Activated CD8-positive, alpha-beta T cell treated with anti-CD3 and anti-CD28 coated beads, Interleukin-2, amount 10 ng/mL, durations not matched to agents 7 days and 5 days (primary cell): ENCODE measurements at regions of chr1 and their contacts with region 1.

Region 1: DNA sequence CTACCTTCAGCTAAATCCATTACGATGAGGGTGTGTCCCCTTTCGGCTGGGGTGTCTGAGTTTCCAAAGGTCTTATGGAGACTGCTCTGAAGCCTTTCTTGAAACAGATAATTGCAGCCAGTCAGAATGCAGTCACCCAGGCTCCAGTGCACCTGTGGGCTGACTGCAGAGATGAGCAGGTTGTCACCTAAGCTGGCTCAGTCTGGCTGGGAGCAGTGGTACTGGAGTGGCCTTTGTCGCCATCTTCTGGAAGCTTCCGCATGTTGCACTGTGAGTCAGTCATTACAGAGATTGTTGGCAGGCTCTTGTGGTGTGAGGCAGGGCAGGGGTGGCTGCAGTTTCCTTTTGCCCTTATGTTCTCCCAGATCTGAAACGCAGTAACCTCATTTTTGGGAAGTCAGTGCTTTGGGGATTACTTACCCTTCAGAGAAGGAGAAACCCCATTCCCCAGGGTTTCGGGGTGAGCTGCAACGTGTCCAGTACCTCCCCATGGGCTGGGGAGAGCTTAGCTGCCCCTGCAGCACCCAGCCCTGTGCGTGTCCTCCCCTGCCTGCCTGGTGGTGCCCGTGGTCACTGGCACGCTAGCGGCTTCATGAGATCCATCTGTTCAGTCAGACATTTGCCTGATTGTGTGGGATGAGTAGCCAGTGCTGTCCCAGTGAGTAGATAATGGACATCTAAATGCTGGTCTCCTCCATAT is 48.0 kb downstream of the SMYD2 start:
- DNase-seq: peak; percentile 86
- ATAC-seq: peak; percentile 94
- H3K4me3 Mint-ChIP-seq: no peak overlapping the region
- H3K27ac Mint-ChIP-seq: no peak overlapping the region
- H3K4me1 Mint-ChIP-seq: peaks cover 12% of the 10 kb centered on the region
- H3K27me3 Mint-ChIP-seq: no peaks in the 10 kb centered on the region

Region 2: DNA sequence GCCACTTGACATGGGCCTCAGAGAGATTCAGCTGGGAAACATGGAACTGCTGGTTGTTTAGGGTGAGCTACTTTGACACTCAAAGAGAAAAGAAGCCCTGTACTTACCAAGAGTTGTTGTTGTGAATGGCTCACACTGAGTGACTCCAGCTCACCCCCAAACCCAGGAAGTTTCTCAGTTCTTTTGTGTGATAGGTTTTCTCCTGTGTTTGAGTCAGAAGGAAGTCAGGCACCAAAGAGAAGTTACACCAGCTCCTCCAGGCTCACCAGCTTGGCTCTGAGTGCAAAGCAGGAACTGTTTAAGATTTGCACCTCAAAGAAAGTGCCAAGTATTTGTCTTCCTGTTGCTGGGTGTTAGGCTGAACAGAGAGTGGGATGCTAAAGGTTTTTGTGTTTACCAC is 452.4 kb before region 1 on chr1:
- CTCF ChIA-PET with region 1: no interaction called
- POLR2A ChIA-PET with region 1: no interaction called
- DNase-seq: no peak
- ATAC-seq: no peak
- H3K4me3 Mint-ChIP-seq: no peak overlapping the region
- H3K27ac Mint-ChIP-seq: no peak overlapping the region
- H3K4me1 Mint-ChIP-seq: peaks cover 3% of the 10 kb centered on the region
- H3K27me3 Mint-ChIP-seq: peaks cover 2% of the 10 kb centered on the region

Region 3: GRCh38 chr1:213987927-213988506 is 340.9 kb before region 1 on chr1 and contains the start of gene PROX1:
- CTCF ChIA-PET with region 1: no interaction called
- POLR2A ChIA-PET with region 1: no interaction called
- DNase-seq: peak; percentile 59
- ATAC-seq: peak; percentile 73
- H3K4me3 Mint-ChIP-seq: peak within 1 kb of the TSS; percentile 79
- H3K27ac Mint-ChIP-seq: peak within 1 kb of the TSS; percentile 70
- H3K4me1 Mint-ChIP-seq: peaks cover 23% of the 10 kb centered on the region
- H3K27me3 Mint-ChIP-seq: peaks cover 85% of the 10 kb centered on the region
- total RNA-seq, gene PROX1: not detected

Region 4: DNA sequence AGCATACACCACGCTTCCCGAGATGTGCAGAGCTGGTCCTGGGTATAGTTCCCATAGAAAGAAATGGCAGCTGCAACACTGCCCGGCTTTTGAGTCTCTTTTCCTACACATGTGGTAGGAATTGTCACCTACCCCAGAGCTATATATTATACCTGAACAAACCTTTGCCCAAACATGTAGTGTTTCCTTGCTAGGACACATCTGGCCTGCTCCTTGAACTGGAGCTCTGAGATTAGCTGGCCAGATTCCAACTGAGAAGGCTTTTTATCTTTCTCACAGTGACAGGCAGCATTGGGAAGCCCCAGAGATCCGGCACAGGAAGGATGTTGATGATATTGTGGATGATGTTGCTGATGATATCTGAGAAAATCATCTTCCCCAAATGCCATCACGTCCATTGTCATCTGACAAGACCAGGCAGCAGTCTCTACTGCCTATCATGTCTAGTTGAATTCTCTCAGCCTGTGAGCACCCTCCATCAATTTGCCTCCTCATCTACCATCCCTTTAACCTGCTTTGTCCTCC is 163.0 kb before region 1 on chr1:
- CTCF ChIA-PET with region 1: no interaction called
- POLR2A ChIA-PET with region 1: no interaction called
- DNase-seq: no peak
- ATAC-seq: no peak
- H3K4me3 Mint-ChIP-seq: no peak overlapping the region
- H3K27ac Mint-ChIP-seq: no peak overlapping the region
- H3K4me1 Mint-ChIP-seq: no peaks in the 10 kb centered on the region
- H3K27me3 Mint-ChIP-seq: no peaks in the 10 kb centered on the region

Region 5: GRCh38 chr1:214281021-214281719 is 47.8 kb before region 1 on chr1 and contains the start of gene SMYD2:
- CTCF ChIA-PET with region 1: interaction called, 24 read pairs
- POLR2A ChIA-PET with region 1: no interaction called
- DNase-seq: peak; percentile 73
- ATAC-seq: peak; percentile 79
- H3K4me3 Mint-ChIP-seq: peak within 1 kb of the TSS; percentile 84
- H3K27ac Mint-ChIP-seq: peak within 1 kb of the TSS; percentile 82
- H3K4me1 Mint-ChIP-seq: peaks cover 47% of the 10 kb centered on the region
- H3K27me3 Mint-ChIP-seq: no peaks in the 10 kb centered on the region
- total RNA-seq, gene SMYD2: 37.2 to 38.4 TPM

Region 6: DNA sequence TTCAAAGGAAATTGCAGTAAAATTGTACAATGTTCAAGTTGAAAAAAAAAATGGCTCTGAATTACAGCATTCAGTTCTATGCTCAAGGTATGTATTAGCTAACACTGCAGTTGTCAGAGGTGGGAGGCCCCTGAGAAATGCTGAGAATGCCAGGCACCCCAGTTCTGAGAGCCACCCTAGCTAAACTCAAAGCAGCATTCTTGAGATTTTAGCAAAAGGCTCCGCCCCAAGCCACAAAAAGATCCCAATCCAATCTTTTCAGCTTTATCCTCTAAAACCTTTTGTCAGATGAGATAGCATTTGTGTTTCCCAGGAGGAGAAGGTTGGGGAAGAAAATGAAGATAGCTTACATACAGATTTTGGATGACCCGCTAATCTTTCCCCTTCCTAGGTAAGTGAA is 20.9 kb after region 1 on chr1:
- CTCF ChIA-PET with region 1: interaction called, 31 read pairs
- POLR2A ChIA-PET with region 1: no interaction called
- DNase-seq: no peak
- ATAC-seq: no peak
- H3K4me3 Mint-ChIP-seq: no peak overlapping the region
- H3K27ac Mint-ChIP-seq: no peak overlapping the region
- H3K4me1 Mint-ChIP-seq: no peaks in the 10 kb centered on the region
- H3K27me3 Mint-ChIP-seq: peaks cover 3% of the 10 kb centered on the region

Region 7: GRCh38 chr1:214427871-214428277 is 99.0 kb after region 1 on chr1:
- CTCF ChIA-PET with region 1: interaction called, 10 read pairs
- POLR2A ChIA-PET with region 1: no interaction called
- DNase-seq: peak; percentile 90
- ATAC-seq: peak; percentile 99
- H3K4me3 Mint-ChIP-seq: peak overlapping the region; percentile 56
- H3K27ac Mint-ChIP-seq: peak overlapping the region; percentile 96
- H3K4me1 Mint-ChIP-seq: peaks cover 33% of the 10 kb centered on the region
- H3K27me3 Mint-ChIP-seq: peaks cover under 1% of the 10 kb centered on the region

Region 8: GRCh38 chr1:214584805-214585766 is 256.2 kb after region 1 on chr1:
- CTCF ChIA-PET with region 1: interaction called, 235 read pairs
- POLR2A ChIA-PET with region 1: no interaction called
- DNase-seq: no peak
- ATAC-seq: peak; percentile 33
- H3K4me3 Mint-ChIP-seq: no peak overlapping the region
- H3K27ac Mint-ChIP-seq: no peak overlapping the region
- H3K4me1 Mint-ChIP-seq: no peaks in the 10 kb centered on the region
- H3K27me3 Mint-ChIP-seq: peaks cover 11% of the 10 kb centered on the region

Region 9: DNA sequence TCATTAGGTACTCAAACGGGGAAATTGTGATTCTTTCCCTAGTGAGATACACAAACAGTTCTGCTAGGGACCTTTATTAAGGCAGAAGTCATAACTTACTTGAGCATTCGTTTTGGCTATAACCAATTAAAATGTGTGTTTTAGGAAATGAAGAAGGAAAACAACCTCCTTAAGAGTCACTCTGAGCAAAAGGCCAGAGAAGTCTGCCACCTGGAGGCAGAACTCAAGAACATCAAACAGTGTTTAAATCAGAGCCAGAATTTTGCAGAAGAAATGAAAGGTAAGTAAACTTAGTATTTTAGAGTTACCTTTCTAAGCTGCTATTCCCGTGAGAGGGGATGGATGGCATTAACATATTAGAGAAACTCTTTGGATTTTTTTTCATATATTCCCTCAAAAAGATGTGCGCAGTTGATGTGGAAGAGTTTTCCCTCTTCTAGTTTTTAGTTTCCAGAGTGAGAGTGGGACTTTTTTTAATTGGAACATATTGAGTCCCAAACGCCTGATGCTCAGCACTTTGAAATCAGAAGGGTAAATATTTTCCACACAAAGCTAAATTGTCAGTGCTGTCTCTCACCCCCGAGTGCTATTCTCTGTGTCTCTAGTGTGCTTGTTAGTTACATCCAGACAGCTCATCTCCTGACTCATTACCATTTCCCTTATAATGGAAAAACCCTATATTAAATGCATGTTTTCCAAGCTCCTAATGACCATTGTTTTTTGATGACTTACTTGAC is 309.0 kb after region 1 on chr1:
- CTCF ChIA-PET with region 1: interaction called, 33 read pairs
- POLR2A ChIA-PET with region 1: no interaction called
- DNase-seq: peak; percentile 40
- ATAC-seq: no peak
- H3K4me3 Mint-ChIP-seq: no peak overlapping the region
- H3K27ac Mint-ChIP-seq: no peak overlapping the region
- H3K4me1 Mint-ChIP-seq: peaks cover 20% of the 10 kb centered on the region
- H3K27me3 Mint-ChIP-seq: no peaks in the 10 kb centered on the region